Left ventricle myocardium superior (tissue), 1 donor: ENCODE measurements at regions of chr13 and their contacts with region 1.

Region 1: DNA sequence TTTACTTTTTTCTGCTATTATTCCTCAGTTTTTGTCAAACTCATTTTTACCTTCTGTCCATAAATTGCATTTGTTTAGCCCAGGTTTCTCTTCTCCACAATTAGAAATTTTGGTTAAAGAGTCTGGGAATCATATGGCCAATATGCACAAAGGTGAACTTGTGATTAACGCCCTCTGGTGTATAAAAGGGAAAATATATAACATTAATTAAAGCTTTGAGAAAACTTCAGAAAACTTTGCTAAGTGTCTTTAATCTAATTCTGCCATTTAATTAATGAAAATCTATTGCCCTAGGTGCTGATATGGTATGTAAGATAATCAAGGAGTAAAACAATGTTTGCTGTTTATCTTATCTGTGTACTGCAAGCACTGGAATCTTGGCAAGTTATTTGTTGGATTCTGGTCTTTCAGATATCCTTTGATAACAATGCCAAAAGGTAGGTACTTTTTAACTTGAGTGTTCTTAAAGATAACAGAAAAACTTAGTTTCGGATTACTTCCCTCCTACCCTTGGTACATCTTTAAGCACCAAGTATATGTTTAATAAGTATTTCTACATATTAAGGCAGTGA is 402.6 kb downstream of the SUCLA2 start:
- DNase-seq: no peak
- ATAC-seq: no peak

Region 2: DNA sequence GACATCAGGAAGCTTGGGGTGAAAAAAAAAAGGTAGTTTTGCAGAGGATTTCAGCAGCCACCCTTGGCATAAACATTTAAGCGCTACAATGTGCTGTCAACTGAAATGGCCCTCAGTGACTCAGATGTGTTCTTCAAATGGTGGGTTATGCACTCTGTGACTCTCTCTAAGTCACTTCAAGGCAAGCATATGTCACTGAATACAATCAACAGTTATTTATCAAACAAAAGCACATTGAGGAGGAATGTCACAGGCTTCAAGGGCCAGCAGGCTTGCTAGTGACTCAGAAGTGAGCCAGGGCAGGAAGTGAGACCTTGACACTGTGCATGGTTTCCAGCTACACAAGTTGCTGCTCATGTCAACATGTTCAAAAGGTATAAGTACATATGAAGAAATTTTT is 177.9 kb before region 1 on chr13:
- intact Hi-C with region 1: loop called (anchors 2 kb)
- DNase-seq: no peak
- ATAC-seq: peak; percentile 50